Psoas muscle (tissue), 8 donors: ENCODE measurements at regions of chr15 and their contacts with region 1.

Region 1: DNA sequence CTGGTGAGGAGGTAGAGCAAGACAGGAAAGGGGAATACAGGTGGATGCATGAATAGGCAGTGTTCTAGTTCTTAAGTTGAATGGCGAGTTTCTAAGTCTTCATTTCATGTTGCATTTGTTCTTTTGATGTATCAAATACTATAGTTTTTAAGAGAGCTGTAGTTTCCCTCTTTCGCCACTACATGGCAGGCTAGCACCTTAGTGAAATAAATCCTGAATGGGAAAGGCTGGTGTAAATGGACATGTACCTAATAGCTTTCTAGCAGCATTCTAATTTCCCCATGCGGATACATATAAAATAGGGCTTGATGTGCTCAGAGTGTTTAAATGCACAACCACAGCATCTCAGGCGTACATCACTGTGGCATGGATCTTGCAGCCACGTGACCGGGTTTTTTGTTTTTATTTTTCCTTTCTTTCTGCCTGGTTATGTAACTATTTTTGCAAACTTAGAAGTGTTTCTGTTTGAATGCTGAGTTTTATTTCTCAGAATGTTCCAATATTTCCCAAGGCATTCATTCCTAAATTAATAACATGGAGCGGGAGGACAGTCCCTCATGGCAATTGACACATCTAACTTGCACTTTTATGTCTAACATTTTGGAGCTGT is 23.5 kb upstream of the CLN6 start:
- DNase-seq: no peak
- ATAC-seq: peak in 3 of 4 donors; percentile 34 to 60 (median 58)
- H3K4me3 ChIP-seq: no peak overlapping the region
- H3K27ac ChIP-seq: no peak overlapping the region
- H3K4me1 ChIP-seq: peaks cover 5% of the 10 kb centered on the region
- H3K27me3 ChIP-seq: no peaks in the 10 kb centered on the region
- CTCF ChIP-seq: peak; percentile 93

Region 2: DNA sequence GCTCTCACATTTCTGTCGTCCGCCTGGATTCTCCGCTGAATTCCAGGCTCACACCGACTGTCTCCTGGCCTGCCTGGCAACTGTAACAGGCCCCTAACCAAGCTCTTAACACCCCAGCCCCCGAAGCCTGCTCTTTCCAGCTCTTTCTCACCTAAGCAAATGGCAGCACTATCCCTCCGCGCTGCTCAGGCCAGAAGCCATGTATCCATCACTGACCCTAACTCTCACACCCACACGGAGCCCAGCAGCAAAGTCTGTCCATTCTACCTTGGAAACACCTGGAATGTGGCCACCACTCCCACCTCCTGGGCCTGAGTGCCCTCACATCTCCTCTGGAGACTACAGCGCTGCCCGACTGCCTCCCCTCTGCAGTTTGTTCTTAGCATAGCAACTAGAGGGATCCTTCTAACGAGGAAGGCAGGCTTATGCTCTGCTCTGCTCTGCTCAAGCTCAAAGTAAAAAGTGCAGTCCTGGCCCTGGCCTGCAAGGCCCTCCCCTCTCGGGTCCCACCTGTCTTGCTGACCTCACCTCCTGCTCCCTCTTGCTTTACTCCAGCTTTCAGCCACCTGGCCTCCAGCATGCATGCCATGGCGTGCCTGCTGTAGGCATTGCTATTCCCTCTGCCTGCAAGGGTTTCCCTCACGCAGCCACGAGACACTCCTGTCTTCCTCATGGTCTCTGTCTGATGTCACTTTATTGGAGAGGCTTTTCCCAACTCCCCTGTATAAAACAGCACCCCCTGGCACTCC is 51.7 kb after region 1 on chr15:
- intact Hi-C with region 1: loop called (anchors 2 to 5 kb)
- DNase-seq: no peak
- ATAC-seq: no peak
- H3K4me3 ChIP-seq: no peak overlapping the region
- H3K27ac ChIP-seq: no peak overlapping the region
- H3K4me1 ChIP-seq: peaks cover 9% of the 10 kb centered on the region
- H3K27me3 ChIP-seq: no peaks in the 10 kb centered on the region
- CTCF ChIP-seq: no peak

Region 3: GRCh38 chr15:68383161-68384074 is 130.4 kb after region 1 on chr15:
- intact Hi-C with region 1: loop called (anchors 5 kb)
- DNase-seq: no peak
- ATAC-seq: peak; percentile 48 to 77 (median 60)
- H3K4me3 ChIP-seq: no peak overlapping the region
- H3K27ac ChIP-seq: no peak overlapping the region
- H3K4me1 ChIP-seq: no peaks in the 10 kb centered on the region
- H3K27me3 ChIP-seq: peaks cover 0 to 4% (median 0%) of the 10 kb centered on the region in 3 donors
- CTCF ChIP-seq: peak; percentile 74

Region 4: DNA sequence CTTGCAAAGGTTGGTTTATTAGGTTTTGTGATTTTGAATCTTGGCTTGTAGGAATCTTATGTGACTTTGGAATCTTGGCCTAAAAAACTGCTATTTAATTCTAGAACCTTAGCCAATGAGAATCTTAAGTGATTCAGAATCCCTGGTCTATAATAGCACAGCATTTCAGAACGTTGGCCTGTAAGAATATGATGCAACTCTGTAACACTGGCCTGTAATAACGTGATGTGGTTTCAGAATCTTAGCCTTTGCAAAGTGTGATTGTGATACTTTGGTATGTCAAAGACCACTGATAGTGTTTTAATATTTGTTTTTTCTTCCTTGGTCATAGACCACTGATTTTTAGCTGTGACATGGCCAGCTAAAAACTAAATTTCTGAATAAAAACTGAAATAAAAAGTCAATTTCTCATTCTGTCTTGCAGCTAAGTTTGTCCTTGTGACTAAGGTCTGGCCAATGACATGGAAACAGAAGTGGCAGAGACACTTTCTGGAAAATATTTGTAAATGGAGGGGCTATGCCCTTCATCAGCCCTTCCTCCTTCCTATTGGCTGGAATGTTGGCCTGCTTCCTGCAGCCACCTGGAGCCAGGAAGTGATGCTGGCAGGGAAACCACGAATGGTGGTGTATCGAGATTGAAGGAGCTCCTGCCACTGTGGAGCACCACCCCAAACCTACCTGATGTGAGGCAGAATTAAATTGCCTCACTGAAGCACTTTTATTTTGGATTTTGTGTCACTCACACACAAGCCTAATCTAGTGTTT is 283.5 kb after region 1 on chr15:
- intact Hi-C with region 1: loop called in 1 of 2 experiments (anchors 10 kb)
- DNase-seq: no peak
- ATAC-seq: peak in 2 of 4 donors; percentile 44 to 54
- H3K4me3 ChIP-seq: no peak overlapping the region
- H3K27ac ChIP-seq: no peak overlapping the region
- H3K4me1 ChIP-seq: no peaks in the 10 kb centered on the region
- H3K27me3 ChIP-seq: no peaks in the 10 kb centered on the region
- CTCF ChIP-seq: no peak